HepG2 (cell line): ENCODE measurements at regions of chr1 and their contacts with region 1.

Region 1: GRCh38 chr1:22976461-22977243 is 4.0 kb upstream of the LACTBL1 start:
- DNase-seq: peak; percentile 74
- ATAC-seq: peak; percentile 94
- H3K4me3 ChIP-seq: 0 out of 6 replicates have a peak overlapping the region, but pooled peaks of 1 of the 3 experiments have one; percentile 12
- H3K27ac ChIP-seq: no peak overlapping the region
- H3K4me1 ChIP-seq: peaks cover 32% of the 10 kb centered on the region
- H3K27me3 ChIP-seq: no peaks in the 10 kb centered on the region
- CTCF ChIP-seq: peak; percentile 93
- EP300 ChIP-seq: no peak
- POLR2A ChIP-seq: no peak
- RAD21 ChIP-seq: peak; percentile 90

Region 2: DNA sequence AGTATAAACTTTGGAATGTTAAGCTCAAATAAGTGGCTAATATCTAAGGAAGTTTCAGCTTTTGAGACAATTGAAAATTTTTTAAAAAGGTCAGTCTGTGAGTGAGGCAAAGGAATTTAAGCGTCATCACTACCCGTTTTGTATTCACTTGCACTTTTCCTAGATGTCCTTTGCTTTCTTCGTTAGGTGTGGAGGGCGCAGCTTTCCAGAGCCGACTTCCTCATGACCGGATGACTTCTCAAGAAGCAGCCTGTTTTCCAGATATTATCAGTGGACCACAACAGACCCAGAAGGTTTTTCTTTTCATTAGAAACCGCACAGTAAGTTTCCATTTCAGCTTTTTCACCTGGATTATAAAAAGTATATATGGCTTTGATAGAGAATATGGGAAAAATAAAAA is 73.5 kb after region 1 on chr1:
- CTCF ChIA-PET with region 1: no interaction called
- POLR2A ChIA-PET with region 1: no interaction called
- in situ Hi-C with region 1: no loop called
- intact Hi-C with region 1: loop called (anchors 10 kb)
- DNase-seq: no peak
- ATAC-seq: no peak
- H3K4me3 ChIP-seq: no peak overlapping the region
- H3K27ac ChIP-seq: no peak overlapping the region
- H3K4me1 ChIP-seq: no peaks in the 10 kb centered on the region
- H3K27me3 ChIP-seq: no peaks in the 10 kb centered on the region
- CTCF ChIP-seq: no peak
- EP300 ChIP-seq: no peak
- POLR2A ChIP-seq: no peak
- RAD21 ChIP-seq: no peak

Region 3: DNA sequence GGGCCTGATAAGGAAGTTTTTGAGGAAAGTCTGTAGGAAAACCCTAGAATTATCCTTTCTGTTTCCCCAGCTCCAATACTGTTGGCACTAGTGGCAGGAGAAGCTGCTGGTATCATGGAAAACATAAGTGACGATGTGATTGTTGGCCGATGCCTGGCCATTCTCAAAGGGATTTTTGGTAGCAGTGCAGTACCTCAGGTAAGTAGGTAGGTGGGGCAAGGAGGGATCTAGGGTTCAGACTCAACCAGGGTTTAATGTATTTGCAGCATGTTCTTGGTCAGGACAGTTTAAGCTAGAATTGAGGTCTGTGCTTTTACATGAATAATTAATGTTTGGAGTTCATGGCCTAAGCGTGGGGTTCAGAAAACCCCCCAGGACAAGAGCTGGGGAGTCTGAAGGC is 104.7 kb after region 1 on chr1:
- CTCF ChIA-PET with region 1: interaction called, 3 read pairs
- POLR2A ChIA-PET with region 1: no interaction called
- in situ Hi-C with region 1: loop called (anchors 10 kb)
- intact Hi-C with region 1: no loop called
- DNase-seq: no peak
- ATAC-seq: peak; percentile 52
- H3K4me3 ChIP-seq: no peak overlapping the region
- H3K27ac ChIP-seq: no peak overlapping the region
- H3K4me1 ChIP-seq: no peaks in the 10 kb centered on the region
- H3K27me3 ChIP-seq: no peaks in the 10 kb centered on the region
- CTCF ChIP-seq: peak; percentile 22
- EP300 ChIP-seq: no peak
- POLR2A ChIP-seq: no peak
- RAD21 ChIP-seq: no peak

Region 4: GRCh38 chr1:23098463-23099170 is 122.0 kb after region 1 on chr1:
- CTCF ChIA-PET with region 1: interaction called, 8 read pairs
- POLR2A ChIA-PET with region 1: no interaction called
- in situ Hi-C with region 1: no loop called
- intact Hi-C with region 1: loop called (anchors 10 kb)
- DNase-seq: peak; percentile 62
- ATAC-seq: peak; percentile 55; the same call in 2 of the 3 replicates
- H3K4me3 ChIP-seq: no peak overlapping the region
- H3K27ac ChIP-seq: no peak overlapping the region
- H3K4me1 ChIP-seq: peaks cover 50% of the 10 kb centered on the region
- H3K27me3 ChIP-seq: no peaks in the 10 kb centered on the region
- CTCF ChIP-seq: peak; percentile 89
- EP300 ChIP-seq: no peak
- POLR2A ChIP-seq: no peak
- RAD21 ChIP-seq: peak; percentile 92

Region 5: DNA sequence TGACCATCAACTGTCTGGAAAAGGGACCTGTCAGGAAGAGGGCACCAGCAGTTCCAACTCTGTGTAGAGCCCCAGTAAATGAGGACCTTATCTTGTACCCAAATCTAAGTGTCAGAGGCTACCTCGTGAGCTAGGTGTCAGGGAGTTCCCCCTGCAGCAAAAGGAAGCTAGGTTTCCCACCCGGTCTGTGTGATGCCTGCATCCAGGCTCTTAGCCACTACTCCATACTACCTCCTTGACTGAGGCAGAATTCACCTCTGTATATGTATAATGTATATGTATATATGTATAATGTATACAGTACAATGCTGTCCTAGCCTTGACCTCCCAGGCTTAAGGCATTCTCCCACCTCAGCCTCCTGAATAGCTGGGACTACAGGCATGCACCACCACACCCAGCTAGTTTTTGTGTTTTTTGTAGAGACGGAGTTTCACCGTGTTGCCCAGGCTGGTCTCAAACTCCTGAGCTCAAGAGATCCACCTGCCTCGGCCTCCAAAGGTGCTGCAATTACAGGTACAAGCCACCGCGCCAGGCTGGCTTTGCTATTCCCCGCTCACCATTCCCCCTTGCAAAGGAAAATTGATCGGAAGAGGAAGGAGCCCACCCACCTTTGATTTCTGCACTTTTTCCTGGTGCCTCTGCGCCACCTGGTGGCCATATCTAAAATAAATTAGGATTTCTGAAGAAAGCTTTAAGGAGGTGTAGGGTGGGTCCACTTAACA is 207.7 kb after region 1 on chr1:
- CTCF ChIA-PET with region 1: interaction called, 12 read pairs
- POLR2A ChIA-PET with region 1: no interaction called
- in situ Hi-C with region 1: no loop called
- intact Hi-C with region 1: loop called (anchors 1 kb)
- DNase-seq: peak; percentile 44
- ATAC-seq: no peak
- H3K4me3 ChIP-seq: peak overlapping the region; percentile 39 to 62 (median 49); a peak in 5 of 6 replicates
- H3K27ac ChIP-seq: no peak overlapping the region
- H3K4me1 ChIP-seq: peaks cover 48% of the 10 kb centered on the region
- H3K27me3 ChIP-seq: 0 out of 5 replicates have a peak, but pooled peaks cover 0 to 1% of the 10 kb centered on the region in 2 experiments
- CTCF ChIP-seq: peak; percentile 83
- EP300 ChIP-seq: no peak
- POLR2A ChIP-seq: no peak
- RAD21 ChIP-seq: peak; percentile 80

Region 6: GRCh38 chr1:23194119-23194984 is 217.7 kb after region 1 on chr1:
- CTCF ChIA-PET with region 1: no interaction called
- POLR2A ChIA-PET with region 1: no interaction called
- in situ Hi-C with region 1: loop called (anchors 5 kb)
- intact Hi-C with region 1: no loop called
- DNase-seq: no peak
- ATAC-seq: no peak
- H3K4me3 ChIP-seq: no peak overlapping the region
- H3K27ac ChIP-seq: no peak overlapping the region
- H3K4me1 ChIP-seq: peaks cover 13% of the 10 kb centered on the region
- H3K27me3 ChIP-seq: no peaks in the 10 kb centered on the region
- CTCF ChIP-seq: no peak
- EP300 ChIP-seq: no peak
- POLR2A ChIP-seq: no peak
- RAD21 ChIP-seq: no peak

Region 7: DNA sequence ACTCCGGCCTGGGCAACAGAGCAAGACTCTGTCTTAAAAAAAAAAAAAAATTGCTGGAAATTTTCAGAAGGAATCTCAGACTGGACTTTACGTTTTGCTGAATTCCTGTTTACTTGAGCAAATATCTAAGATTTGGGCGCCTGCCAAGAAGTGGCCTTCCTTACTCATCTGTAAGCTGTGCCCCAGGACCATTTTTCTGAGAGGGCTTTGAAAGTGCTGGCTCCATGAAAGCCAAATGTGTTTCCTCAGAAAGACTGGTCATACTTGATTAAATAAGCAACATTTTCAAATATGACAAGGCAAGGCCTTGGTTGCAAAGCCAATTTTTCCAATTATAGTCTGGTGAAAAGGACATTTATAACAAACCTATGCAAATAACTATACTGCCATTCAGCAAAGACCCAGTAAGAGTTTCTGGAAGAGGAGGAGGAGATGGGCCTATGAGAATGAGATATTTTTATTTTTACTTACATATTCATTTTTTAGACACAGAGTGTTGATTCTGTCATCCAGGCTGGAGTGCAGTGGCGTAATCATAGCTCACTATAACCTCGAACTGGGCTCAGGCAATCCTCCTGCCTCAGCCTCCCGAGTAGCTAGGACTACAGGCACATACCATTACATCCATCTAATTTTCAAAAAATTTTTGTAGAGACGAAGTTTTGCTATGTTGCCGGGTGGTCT is 296.9 kb after region 1 on chr1:
- CTCF ChIA-PET with region 1: no interaction called
- POLR2A ChIA-PET with region 1: no interaction called
- in situ Hi-C with region 1: loop called (anchors 10 kb)
- intact Hi-C with region 1: loop called (anchors 10 kb)
- DNase-seq: peak; percentile 23
- ATAC-seq: no peak
- H3K4me3 ChIP-seq: no peak overlapping the region
- H3K27ac ChIP-seq: no peak overlapping the region
- H3K4me1 ChIP-seq: peaks cover 10% of the 10 kb centered on the region
- H3K27me3 ChIP-seq: no peaks in the 10 kb centered on the region; a peak in 1 of 5 replicates
- CTCF ChIP-seq: no peak
- EP300 ChIP-seq: no peak
- POLR2A ChIP-seq: no peak
- RAD21 ChIP-seq: no peak